ENCODE measurements at regions of chr9 and their contacts with region 1.

Region 1: GRCh38 chr9:18811171-18811570 is 221.8 kb downstream of the SAXO1 start:
- DNase-seq: no peak
- ATAC-seq: peak in 1 of 4 experiments; percentile 17
- H3K4me3 ChIP-seq: no peak overlapping the region
- H3K4me3 Mint-ChIP-seq: no peak overlapping the region
- H3K27ac ChIP-seq: no peak overlapping the region
- H3K27ac Mint-ChIP-seq: no peak overlapping the region
- H3K4me1 ChIP-seq: no peaks in the 10 kb centered on the region
- H3K4me1 Mint-ChIP-seq: no peaks in the 10 kb centered on the region
- H3K27me3 ChIP-seq: no peaks in the 10 kb centered on the region
- H3K27me3 Mint-ChIP-seq: peaks cover 0 to 15% of the 10 kb centered on the region in 2 donors

Region 2: GRCh38 chr9:18710065-18710464 is 101.1 kb before region 1 on chr9:
- CTCF ChIA-PET with region 1: no interaction called
- POLR2A ChIA-PET with region 1: no interaction called
- DNase-seq: no peak
- ATAC-seq: no peak
- H3K4me3 ChIP-seq: no peak overlapping the region
- H3K4me3 Mint-ChIP-seq: no peak overlapping the region
- H3K27ac ChIP-seq: no peak overlapping the region
- H3K27ac Mint-ChIP-seq: no peak overlapping the region
- H3K4me1 ChIP-seq: no peaks in the 10 kb centered on the region
- H3K4me1 Mint-ChIP-seq: no peaks in the 10 kb centered on the region
- H3K27me3 ChIP-seq: peaks cover 0 to 2% of the 10 kb centered on the region in 2 experiments
- H3K27me3 Mint-ChIP-seq: peaks cover 7 to 11% of the 10 kb centered on the region in 2 donors

Region 3: DNA sequence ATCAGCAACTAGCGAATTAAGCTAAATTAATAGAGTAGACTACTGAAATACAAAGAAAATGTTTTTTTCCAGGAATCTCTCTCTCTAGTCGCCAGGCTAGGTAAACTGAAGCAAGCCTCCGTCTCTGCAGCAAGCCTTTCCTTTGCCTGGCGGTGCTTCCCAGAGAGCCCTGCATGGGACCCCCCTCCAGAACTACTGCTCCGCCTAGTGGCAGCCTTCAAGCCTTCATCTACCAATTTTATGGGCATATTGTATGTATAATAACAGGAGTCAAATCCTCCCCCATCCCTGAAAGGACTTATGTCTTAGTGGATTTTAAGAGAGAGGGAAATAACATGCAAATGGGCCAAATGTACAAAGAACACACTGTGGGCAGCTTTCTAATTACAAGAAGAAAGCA is 20.1 kb before region 1 on chr9:
- CTCF ChIA-PET with region 1: no interaction called
- POLR2A ChIA-PET with region 1: no interaction called
- DNase-seq: no peak
- ATAC-seq: no peak
- H3K4me3 ChIP-seq: no peak overlapping the region
- H3K4me3 Mint-ChIP-seq: no peak overlapping the region
- H3K27ac ChIP-seq: no peak overlapping the region
- H3K27ac Mint-ChIP-seq: no peak overlapping the region
- H3K4me1 ChIP-seq: no peaks in the 10 kb centered on the region
- H3K4me1 Mint-ChIP-seq: no peaks in the 10 kb centered on the region
- H3K27me3 ChIP-seq: no peaks in the 10 kb centered on the region
- H3K27me3 Mint-ChIP-seq: no peaks in the 10 kb centered on the region

Region 4: GRCh38 chr9:18849890-18850677 is 38.9 kb after region 1 on chr9:
- CTCF ChIA-PET with region 1: no interaction called
- POLR2A ChIA-PET with region 1: interaction called in 1 of 2 experiments, 10 read pairs
- DNase-seq: no peak
- ATAC-seq: no peak
- H3K4me3 ChIP-seq: no peak overlapping the region
- H3K4me3 Mint-ChIP-seq: no peak overlapping the region
- H3K27ac ChIP-seq: no peak overlapping the region
- H3K27ac Mint-ChIP-seq: no peak overlapping the region
- H3K4me1 ChIP-seq: no peaks in the 10 kb centered on the region
- H3K4me1 Mint-ChIP-seq: no peaks in the 10 kb centered on the region
- H3K27me3 ChIP-seq: peaks cover 0 to 5% of the 10 kb centered on the region in 2 experiments
- H3K27me3 Mint-ChIP-seq: peaks cover 0 to 10% of the 10 kb centered on the region in 2 donors